Heart left ventricle (tissue), 16 donors: ENCODE measurements at regions of chr7 and their contacts with region 1.

Region 1: DNA sequence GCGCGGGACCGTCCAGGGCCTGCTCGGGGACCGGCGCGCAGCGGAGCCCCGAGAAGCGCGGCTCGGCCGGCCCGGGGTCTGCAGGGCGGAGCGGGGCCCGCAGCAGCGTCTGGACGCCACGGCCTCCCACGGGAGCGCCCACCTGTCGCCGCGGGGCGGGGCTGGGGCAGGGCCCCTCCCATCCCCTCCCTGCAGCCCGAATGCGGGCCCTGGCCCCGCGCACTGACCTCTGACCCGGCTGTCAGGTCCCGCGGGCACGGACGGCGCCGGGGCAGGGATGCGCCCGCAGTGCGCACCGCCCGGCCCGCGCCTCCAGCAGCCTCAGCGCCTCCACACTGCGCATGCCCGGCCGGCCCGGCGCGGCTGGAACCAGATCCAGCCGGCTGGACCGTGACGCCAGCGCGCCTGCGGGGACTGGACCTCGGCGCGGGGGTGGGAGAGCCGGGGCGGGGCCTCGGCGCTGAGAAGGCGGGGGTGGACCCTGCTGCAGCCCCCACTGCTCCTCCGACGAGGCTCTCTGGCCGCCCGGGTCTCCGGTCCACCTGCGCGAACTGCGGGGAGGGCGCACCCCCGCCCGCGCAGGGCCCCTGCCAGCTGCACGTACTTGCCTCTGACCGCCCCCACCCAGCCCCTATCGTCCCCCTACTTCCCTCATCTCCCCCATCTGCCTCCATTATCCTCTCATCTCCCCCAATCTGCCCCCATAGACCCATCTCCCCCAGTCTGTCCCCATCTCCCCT is 16.1 kb upstream of the GPR146 start:
- DNase-seq: peak; percentile 93 to 96 (median 94)
- ATAC-seq: peak; percentile 81 to 95 (median 93)
- H3K4me3 ChIP-seq: peak overlapping the region; percentile 64 to 98 (median 84)
- H3K27ac ChIP-seq: peak overlapping the region; percentile 45 to 97 (median 92)
- H3K4me1 ChIP-seq: peaks cover 4 to 39% (median 15%) of the 10 kb centered on the region in 12 donors
- H3K27me3 ChIP-seq: no peaks in the 10 kb centered on the region
- CTCF ChIP-seq: no peak
- POLR2A ChIP-seq: peak in 1 of 2 donors; percentile 65

Region 2: DNA sequence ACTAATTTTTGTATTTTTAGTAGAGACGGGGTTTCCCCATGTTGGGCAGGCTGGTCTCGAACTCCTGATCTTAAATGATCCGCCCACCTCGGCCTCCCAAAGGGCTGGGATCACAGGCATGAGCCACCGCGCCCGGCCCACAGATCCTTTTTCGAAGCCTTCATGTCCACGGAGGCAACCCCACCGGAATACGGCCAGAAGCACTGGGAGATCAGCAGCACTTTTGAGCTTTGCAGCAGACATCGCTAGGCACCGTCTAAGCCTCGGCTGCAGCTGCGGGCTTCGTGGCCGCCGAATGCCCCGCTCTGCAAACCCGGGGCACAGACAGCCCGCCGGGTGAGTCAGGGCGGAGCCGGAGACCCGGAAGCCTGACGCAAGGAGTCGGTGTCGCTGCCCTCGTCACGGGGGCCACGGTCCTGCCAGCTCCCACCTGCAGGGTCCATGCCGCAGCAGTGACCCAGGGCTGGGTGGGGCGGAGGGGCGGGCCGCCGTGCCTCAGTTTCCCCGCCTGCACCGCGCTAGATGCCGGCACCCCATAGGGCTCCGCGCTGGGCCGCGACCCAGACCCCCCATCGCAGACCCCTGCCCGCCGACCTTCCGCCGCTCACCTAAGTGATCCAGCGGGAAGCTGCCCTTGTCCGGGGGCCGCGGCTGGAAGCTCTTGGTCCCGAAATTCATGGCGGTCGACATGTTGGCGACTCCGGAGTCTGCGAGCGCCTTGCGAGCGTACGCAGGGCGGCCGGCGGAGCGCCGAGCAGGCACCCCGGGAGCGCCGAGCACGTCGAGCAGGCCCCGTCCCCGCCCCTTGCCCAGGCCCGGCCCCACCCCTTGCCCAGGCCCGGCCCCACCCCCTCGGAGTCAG is 53.1 kb before region 1 on chr7 and contains the start of gene COX19:
- intact Hi-C with region 1: no loop called
- DNase-seq: peak; percentile 89 to 95 (median 91)
- ATAC-seq: peak; percentile 91 to 98 (median 95)
- H3K4me3 ChIP-seq: peak within 1 kb of the TSS; percentile 71 to 100 (median 98)
- H3K27ac ChIP-seq: peak within 1 kb of the TSS; percentile 85 to 99 (median 96)
- H3K4me1 ChIP-seq: peaks cover 3 to 36% (median 25%) of the 10 kb centered on the region in 12 donors
- H3K27me3 ChIP-seq: no peaks in the 10 kb centered on the region
- CTCF ChIP-seq: no peak
- POLR2A ChIP-seq: peak in 1 of 2 donors; percentile 67
- total RNA-seq, gene COX19: 3.1 to 7.8 (median 6.5) TPM

Region 3: GRCh38 chr7:1044191-1045068 is 16.2 kb after region 1 on chr7 and contains the start of gene GPR146:
- intact Hi-C with region 1: loop called in 2 of 10 experiments (anchors 2 kb)
- DNase-seq: peak; percentile 97 to 98 (median 98)
- ATAC-seq: peak; percentile 95 to 97 (median 96)
- H3K4me3 ChIP-seq: peak within 1 kb of the TSS; percentile 60 to 94 (median 78)
- H3K27ac ChIP-seq: peak within 1 kb of the TSS; percentile 85 to 97 (median 92)
- H3K4me1 ChIP-seq: peaks cover 5 to 77% (median 51%) of the 10 kb centered on the region in 12 donors
- H3K27me3 ChIP-seq: no peaks in the 10 kb centered on the region
- CTCF ChIP-seq: peak; percentile 30 to 72 (median 52)
- POLR2A ChIP-seq: peak in 1 of 2 donors; percentile 50
- total RNA-seq, gene GPR146: 12.3 to 56.8 (median 25.2) TPM

Region 4: GRCh38 chr7:1059200-1060091 is 31.2 kb after region 1 on chr7:
- intact Hi-C with region 1: loop called in 3 of 10 experiments (anchors 2 to 5 kb)
- DNase-seq: peak in 1 of 5 donors; percentile 18
- ATAC-seq: peak in 2 of 4 donors; percentile 4 to 8
- H3K4me3 ChIP-seq: no peak overlapping the region
- H3K27ac ChIP-seq: peak overlapping the region in 2 of 12 donors; percentile 45 to 67
- H3K4me1 ChIP-seq: peaks cover 4 to 42% (median 36%) of the 10 kb centered on the region in 12 donors
- H3K27me3 ChIP-seq: peaks cover 0 to 5% (median 0%) of the 10 kb centered on the region in 9 donors
- CTCF ChIP-seq: no peak
- POLR2A ChIP-seq: no peak

Region 5: DNA sequence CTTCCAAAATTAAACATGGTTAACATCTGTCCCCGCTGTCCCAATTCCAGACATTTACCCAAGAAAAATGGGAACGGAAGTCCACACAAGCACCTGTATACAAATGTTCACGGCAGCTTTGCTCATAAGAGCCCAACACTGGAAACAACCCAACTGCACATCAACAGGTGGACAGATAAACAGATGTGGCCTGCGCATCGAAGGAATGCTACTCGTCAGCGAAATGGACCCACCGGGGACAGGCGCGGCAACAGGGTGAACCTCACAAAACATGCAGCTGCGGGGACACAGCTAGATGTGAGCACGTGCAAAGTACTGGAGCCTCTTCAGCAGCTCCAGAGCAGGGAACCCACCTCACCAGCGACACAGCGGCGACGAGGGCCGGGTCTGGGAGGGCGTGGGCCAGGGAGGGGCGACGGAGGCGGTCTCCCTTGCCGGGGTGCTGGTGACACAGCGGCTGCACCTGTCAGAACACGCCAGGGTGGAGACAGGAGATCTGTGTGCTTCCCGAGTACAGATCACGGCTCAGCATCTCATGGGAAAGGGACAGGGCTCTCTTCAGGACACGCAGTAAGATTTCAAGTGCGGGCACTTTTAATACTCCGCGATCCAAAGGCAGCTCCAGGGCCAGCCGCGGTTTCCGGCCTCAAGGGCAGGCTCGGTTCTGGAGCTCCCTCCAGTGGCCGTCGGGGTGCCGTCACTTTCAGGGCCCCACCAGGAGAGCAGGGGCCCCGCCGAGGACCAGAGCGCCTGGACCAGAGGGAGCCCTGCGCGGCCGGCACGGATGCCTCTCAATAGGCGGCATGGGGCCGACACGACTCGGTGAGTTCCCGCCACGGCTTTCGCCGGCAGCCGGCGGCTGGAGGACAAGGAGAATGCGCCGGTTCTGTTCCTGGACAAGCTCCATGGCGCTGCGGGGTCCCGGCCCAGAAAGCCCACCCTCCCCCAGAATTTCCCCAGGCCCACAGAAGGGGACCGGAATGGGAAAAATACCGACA is 37.4 kb after region 1 on chr7:
- intact Hi-C with region 1: loop called in 4 of 10 experiments (anchors 1 to 5 kb)
- DNase-seq: peak; percentile 84 to 93 (median 86)
- ATAC-seq: peak; percentile 81 to 97 (median 93)
- H3K4me3 ChIP-seq: peak overlapping the region in 10 of 12 donors; percentile 12 to 50 (median 26)
- H3K27ac ChIP-seq: no peak overlapping the region
- H3K4me1 ChIP-seq: peaks cover 2 to 22% (median 18%) of the 10 kb centered on the region in 12 donors
- H3K27me3 ChIP-seq: no peaks in the 10 kb centered on the region
- CTCF ChIP-seq: peak; percentile 89 to 99 (median 96)
- POLR2A ChIP-seq: peak in 1 of 2 donors; percentile 21